Activated B cell treated with CpG ODN at 0.5 μM for 24 hours (primary cell): ENCODE measurements at regions of chr20 and their contacts with region 1.

Region 1: GRCh38 chr20:41136680-41137613 is at the start of gene PLCG1:
- DNase-seq: peak; percentile 84
- ATAC-seq: peak; percentile 73
- H3K4me3 Mint-ChIP-seq: peak within 1 kb of the TSS; percentile 84
- H3K27ac Mint-ChIP-seq: peak within 1 kb of the TSS; percentile 78
- H3K4me1 Mint-ChIP-seq: peaks cover 69% of the 10 kb centered on the region
- H3K27me3 Mint-ChIP-seq: no peaks in the 10 kb centered on the region
- CTCF ChIP-seq: no peak
- total RNA-seq, gene PLCG1: 61.1 and 61.8 TPM in 2 replicates

Region 2: DNA sequence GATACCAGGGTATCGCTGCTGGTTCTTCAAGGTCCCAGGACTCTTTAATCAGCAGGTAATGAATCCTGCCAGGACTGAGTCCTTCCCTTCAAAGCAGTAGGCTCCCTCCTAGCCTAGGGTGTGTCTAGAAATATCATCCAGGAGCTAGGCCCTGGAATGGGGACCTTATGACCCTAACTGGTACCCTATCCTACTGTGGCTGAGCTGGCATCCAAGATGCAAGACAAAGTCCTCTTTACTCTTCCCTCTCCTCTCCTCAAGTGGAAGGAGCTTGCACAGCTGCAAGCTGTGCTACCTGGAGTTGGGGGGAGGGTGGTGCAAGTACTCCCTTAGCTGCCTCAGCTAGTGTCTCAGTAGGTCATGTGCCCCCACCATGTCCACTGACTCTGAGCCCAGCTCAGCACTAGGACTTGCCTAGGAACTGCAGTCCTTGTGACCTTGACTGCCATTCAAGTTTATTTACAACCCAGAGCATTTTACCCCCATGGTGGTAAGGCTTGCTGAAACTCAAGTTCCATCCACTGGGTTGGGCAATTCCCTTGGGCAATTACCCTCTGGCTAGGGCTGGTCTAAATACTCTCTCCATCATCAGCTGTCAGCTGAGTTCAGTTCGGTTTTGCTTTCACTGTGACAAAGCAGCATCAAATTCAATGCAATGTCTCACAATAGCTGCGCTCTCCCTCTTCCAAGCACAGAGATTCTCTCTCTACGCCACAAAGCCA is 156.7 kb before region 1 on chr20:
- CTCF ChIA-PET with region 1: no interaction called
- POLR2A ChIA-PET with region 1: no interaction called
- intact Hi-C with region 1: no loop called
- DNase-seq: no peak
- ATAC-seq: no peak
- H3K4me3 Mint-ChIP-seq: no peak overlapping the region
- H3K27ac Mint-ChIP-seq: no peak overlapping the region
- H3K4me1 Mint-ChIP-seq: peaks cover 3% of the 10 kb centered on the region
- H3K27me3 Mint-ChIP-seq: peaks cover 9% of the 10 kb centered on the region
- CTCF ChIP-seq: no peak

Region 3: GRCh38 chr20:41154436-41155176 is 17.7 kb after region 1 on chr20:
- CTCF ChIA-PET with region 1: interaction called, 44 read pairs
- POLR2A ChIA-PET with region 1: interaction called, 47 read pairs
- intact Hi-C with region 1: loop called (anchors 1 kb)
- DNase-seq: no peak
- ATAC-seq: no peak
- H3K4me3 Mint-ChIP-seq: no peak overlapping the region
- H3K27ac Mint-ChIP-seq: peak overlapping the region; percentile 80
- H3K4me1 Mint-ChIP-seq: peaks cover 72% of the 10 kb centered on the region
- H3K27me3 Mint-ChIP-seq: no peaks in the 10 kb centered on the region
- CTCF ChIP-seq: no peak

Region 4: DNA sequence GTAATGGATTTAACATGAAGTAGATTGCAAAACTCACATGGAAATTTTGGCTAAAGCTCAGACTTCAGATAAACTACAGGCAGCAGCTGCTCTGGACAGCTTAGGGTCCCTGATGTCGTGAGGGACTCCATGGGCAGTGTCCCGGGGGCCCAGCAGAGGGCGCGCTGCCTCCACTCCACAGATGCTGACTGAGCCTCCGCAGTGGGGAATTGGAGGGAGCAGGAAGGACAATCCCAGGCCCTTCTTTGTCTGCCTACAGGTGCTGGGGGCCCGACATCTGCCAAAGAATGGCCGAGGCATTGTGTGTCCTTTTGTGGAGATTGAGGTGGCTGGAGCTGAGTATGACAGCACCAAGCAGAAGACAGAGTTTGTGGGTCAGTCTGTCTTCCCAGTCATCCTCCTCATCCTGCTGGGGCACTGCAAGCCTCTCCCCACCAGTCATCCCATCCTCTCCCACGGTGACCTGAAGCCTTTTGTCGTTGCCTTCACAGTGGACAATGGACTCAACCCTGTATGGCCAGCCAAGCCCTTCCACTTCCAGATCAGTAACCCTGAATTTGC is 36.3 kb after region 1 on chr20:
- CTCF ChIA-PET with region 1: interaction called, 49 read pairs
- POLR2A ChIA-PET with region 1: no interaction called
- intact Hi-C with region 1: loop called (anchors 1 kb)
- DNase-seq: peak; percentile 67
- ATAC-seq: peak; percentile 95
- H3K4me3 Mint-ChIP-seq: no peak overlapping the region
- H3K27ac Mint-ChIP-seq: no peak overlapping the region
- H3K4me1 Mint-ChIP-seq: no peaks in the 10 kb centered on the region
- H3K27me3 Mint-ChIP-seq: no peaks in the 10 kb centered on the region
- CTCF ChIP-seq: peak; percentile 46

Region 5: GRCh38 chr20:41217422-41217821 is 80.5 kb after region 1 on chr20:
- CTCF ChIA-PET with region 1: no interaction called
- POLR2A ChIA-PET with region 1: no interaction called
- intact Hi-C with region 1: no loop called
- DNase-seq: no peak
- ATAC-seq: no peak
- H3K4me3 Mint-ChIP-seq: no peak overlapping the region
- H3K27ac Mint-ChIP-seq: no peak overlapping the region
- H3K4me1 Mint-ChIP-seq: no peaks in the 10 kb centered on the region
- H3K27me3 Mint-ChIP-seq: no peaks in the 10 kb centered on the region
- CTCF ChIP-seq: no peak

Region 6: GRCh38 chr20:41249406-41250281 is 112.7 kb after region 1 on chr20:
- CTCF ChIA-PET with region 1: no interaction called
- POLR2A ChIA-PET with region 1: no interaction called
- intact Hi-C with region 1: loop called (anchors 1 kb)
- DNase-seq: no peak
- ATAC-seq: peak; percentile 86
- H3K4me3 Mint-ChIP-seq: peak overlapping the region; percentile 56
- H3K27ac Mint-ChIP-seq: peak overlapping the region; percentile 84
- H3K4me1 Mint-ChIP-seq: peaks cover 62% of the 10 kb centered on the region
- H3K27me3 Mint-ChIP-seq: no peaks in the 10 kb centered on the region
- CTCF ChIP-seq: no peak

Region 7: DNA sequence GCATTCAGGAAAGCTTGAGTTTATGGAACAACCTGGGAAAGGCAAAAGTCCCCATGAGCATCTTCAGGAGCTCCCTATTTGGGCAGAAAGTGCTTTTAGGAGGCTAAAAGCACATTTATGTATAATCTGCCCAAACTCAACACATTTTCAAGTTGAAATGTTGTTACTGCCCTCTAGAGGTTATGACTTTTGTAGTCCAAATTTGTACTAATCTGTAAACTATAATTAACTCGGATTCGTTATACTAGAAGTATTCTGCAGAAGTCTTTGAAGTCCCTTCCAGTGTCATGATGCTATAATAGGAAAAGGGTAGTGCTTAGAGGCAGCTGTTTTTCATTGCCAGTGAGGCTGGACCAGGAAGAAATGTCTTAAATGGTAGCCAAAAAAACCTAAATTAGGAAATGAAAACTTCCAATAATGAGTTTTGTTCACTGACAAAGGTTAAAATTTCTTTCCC is 274.5 kb after region 1 on chr20:
- CTCF ChIA-PET with region 1: interaction called, 8 read pairs
- POLR2A ChIA-PET with region 1: no interaction called
- intact Hi-C with region 1: loop called (anchors 2 kb)
- DNase-seq: no peak
- ATAC-seq: no peak
- H3K4me3 Mint-ChIP-seq: no peak overlapping the region
- H3K27ac Mint-ChIP-seq: no peak overlapping the region
- H3K4me1 Mint-ChIP-seq: no peaks in the 10 kb centered on the region
- H3K27me3 Mint-ChIP-seq: no peaks in the 10 kb centered on the region
- CTCF ChIP-seq: no peak